PC-9 (cell line): ENCODE measurements at regions of chr4 and their contacts with region 1.

Region 1: DNA sequence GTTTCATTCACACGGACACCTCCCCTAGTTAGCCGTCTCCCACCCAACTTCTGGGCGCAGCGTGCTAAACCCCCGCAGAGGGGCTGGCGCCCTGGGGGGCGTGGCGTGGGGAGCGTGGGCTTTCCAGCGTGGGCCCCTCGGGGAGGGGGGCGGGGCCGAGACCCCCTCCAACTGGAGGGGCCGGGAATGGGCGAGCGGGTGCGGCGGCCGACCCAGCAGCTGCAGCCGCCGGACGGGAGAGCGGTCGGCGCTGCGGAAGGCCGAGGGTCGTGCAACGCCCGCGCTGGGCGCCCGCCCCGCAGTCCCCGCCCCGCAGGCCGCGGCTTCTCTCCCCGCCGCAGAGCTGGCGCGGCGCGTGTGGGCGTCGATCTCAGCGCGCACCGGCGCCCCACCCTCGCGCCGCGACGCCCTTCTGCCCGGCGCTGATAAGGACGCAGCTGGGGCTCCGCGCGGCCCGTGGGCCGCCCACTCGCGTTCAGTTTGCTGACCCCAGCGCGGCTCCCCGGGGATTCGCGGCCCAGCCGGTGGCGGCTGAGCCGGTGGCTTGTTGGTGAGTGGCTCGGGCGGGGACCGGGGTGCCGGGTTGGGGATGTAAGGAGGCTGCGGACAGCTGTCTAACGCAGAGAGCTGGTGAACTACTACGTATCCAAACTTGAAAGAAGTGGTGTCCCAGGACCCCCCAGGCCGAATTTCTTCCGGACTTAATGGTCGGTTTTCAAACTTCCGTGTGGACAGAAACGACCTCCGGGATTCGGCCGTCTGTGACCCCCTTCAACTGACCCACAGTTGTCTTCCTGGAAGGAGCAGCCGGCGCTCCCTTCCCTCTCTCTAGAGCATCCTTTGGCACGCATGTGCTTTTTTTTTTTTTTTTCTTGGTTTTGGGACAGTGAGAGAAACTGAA is 1.5 kb downstream of the FHDC1 start:
- DNase-seq: peak in 1 of 2 experiments; percentile 39
- H3K4me3 ChIP-seq: peak overlapping the region; percentile 80
- H3K27ac ChIP-seq: no peak overlapping the region
- H3K4me1 ChIP-seq: peaks cover 4% of the 10 kb centered on the region; the same call in 1 of the 2 replicates
- H3K27me3 ChIP-seq: no peaks in the 10 kb centered on the region
- CTCF ChIP-seq: no peak

Region 2: DNA sequence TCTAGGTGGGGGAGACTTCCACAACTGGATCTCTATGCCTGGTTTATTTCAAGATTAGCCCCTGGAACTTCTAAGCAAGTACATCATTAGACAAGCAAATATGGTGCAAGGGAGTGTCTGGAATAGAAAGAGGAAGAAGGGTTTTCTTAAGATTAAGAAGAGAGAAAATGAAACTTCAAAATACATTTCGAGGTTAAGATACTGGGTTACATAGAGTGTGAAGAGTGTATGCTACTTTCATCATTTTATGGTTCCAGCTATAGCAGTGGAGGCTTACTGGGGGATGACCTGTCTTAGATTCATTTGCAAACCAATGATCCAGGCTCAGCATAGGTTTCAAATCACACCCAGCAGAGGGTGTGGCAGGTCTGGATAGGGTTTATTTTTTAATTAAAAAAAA is 1032.4 kb before region 1 on chr4:
- CTCF ChIA-PET with region 1: no interaction called
- POLR2A ChIA-PET with region 1: no interaction called
- intact Hi-C with region 1: no loop called
- DNase-seq: no peak
- H3K4me3 ChIP-seq: no peak overlapping the region
- H3K27ac ChIP-seq: no peak overlapping the region
- H3K4me1 ChIP-seq: no peaks in the 10 kb centered on the region
- H3K27me3 ChIP-seq: no peaks in the 10 kb centered on the region
- CTCF ChIP-seq: no peak

Region 3: GRCh38 chr4:152500800-152501434 is 436.7 kb before region 1 on chr4:
- CTCF ChIA-PET with region 1: no interaction called
- POLR2A ChIA-PET with region 1: interaction called, 13 read pairs
- intact Hi-C with region 1: no loop called
- DNase-seq: peak; percentile 34 to 54
- H3K4me3 ChIP-seq: no peak overlapping the region
- H3K27ac ChIP-seq: no peak overlapping the region
- H3K4me1 ChIP-seq: no peaks in the 10 kb centered on the region
- H3K27me3 ChIP-seq: no peaks in the 10 kb centered on the region
- CTCF ChIP-seq: peak; percentile 84

Region 4: DNA sequence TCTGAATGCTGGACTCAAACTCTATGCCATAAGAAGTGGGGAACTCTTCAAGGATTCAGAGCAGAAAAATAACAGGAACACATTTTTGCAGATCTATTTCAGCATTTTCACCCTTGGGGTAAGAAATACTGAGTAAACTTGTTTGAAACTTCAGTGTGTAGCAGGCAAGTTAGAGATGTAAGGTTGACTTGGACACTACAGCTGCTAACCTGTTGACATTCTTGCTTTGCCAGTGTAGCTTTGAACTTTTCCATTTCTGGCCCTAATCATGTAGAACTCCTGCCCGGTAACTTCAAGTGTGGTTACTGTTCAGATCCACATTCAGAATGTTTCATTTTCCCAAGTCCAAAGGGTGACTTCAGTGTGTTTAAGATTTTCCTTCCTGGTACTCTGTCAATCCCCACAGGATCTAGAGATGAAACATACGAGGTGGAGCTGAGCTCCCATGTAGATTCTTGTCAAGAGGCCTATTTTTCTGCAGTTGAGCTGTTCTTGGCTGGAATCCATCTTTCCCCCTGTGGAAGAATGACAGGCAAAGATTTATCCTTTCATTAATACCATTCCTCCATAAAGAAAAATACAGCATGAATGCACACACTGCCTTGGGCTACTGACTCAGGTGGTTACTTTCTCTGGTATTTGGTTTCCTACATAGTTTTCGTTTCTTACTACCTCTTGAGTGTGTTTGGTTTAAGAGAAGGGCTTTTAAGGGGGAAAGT is 32.7 kb after region 1 on chr4:
- CTCF ChIA-PET with region 1: interaction called, 5 read pairs
- POLR2A ChIA-PET with region 1: interaction called, 29 read pairs
- intact Hi-C with region 1: loop called (anchors 1 kb)
- DNase-seq: peak; percentile 77 to 92
- H3K4me3 ChIP-seq: no peak overlapping the region
- H3K27ac ChIP-seq: peak overlapping the region; percentile 88
- H3K4me1 ChIP-seq: peaks cover 59% of the 10 kb centered on the region
- H3K27me3 ChIP-seq: no peaks in the 10 kb centered on the region
- CTCF ChIP-seq: no peak

Region 5: GRCh38 chr4:152996108-152996571 is 58.6 kb after region 1 on chr4:
- CTCF ChIA-PET with region 1: interaction called, 3 read pairs
- POLR2A ChIA-PET with region 1: interaction called, 7 read pairs
- intact Hi-C with region 1: loop called (anchors 5 kb)
- DNase-seq: peak; percentile 78 to 85
- H3K4me3 ChIP-seq: peak overlapping the region; percentile 31; the same call in 1 of the 2 replicates
- H3K27ac ChIP-seq: peak overlapping the region; percentile 84
- H3K4me1 ChIP-seq: peaks cover 53% of the 10 kb centered on the region
- H3K27me3 ChIP-seq: no peaks in the 10 kb centered on the region
- CTCF ChIP-seq: no peak

Region 6: GRCh38 chr4:154152546-154152945 is 1215.0 kb after region 1 on chr4:
- CTCF ChIA-PET with region 1: no interaction called
- POLR2A ChIA-PET with region 1: no interaction called
- intact Hi-C with region 1: no loop called
- DNase-seq: no peak
- H3K4me3 ChIP-seq: no peak overlapping the region
- H3K27ac ChIP-seq: no peak overlapping the region
- H3K4me1 ChIP-seq: no peaks in the 10 kb centered on the region
- H3K27me3 ChIP-seq: no peaks in the 10 kb centered on the region
- CTCF ChIP-seq: no peak